Transverse colon (tissue), 4 donors: ENCODE measurements at regions of chr15 and their contacts with region 1.

Region 1: GRCh38 chr15:70488002-70488605 is 275.3 kb downstream of the UACA start:
- DNase-seq: peak; percentile 78
- H3K4me3 ChIP-seq: no peak overlapping the region
- H3K27ac ChIP-seq: no peak overlapping the region
- H3K4me1 ChIP-seq: peaks cover 0 to 17% (median 2%) of the 10 kb centered on the region in 4 donors
- H3K27me3 ChIP-seq: no peaks in the 10 kb centered on the region
- CTCF ChIP-seq: peak; percentile 95 to 98 (median 98)
- EP300 ChIP-seq: no peak
- POLR2A ChIP-seq: no peak

Region 2: GRCh38 chr15:69058830-69059556 is 1429.1 kb before region 1 on chr15:
- in situ Hi-C with region 1: no loop called
- intact Hi-C with region 1: no loop called
- DNase-seq: peak; percentile 89
- H3K4me3 ChIP-seq: no peak overlapping the region
- H3K27ac ChIP-seq: no peak overlapping the region
- H3K4me1 ChIP-seq: peaks cover 0 to 21% (median 9%) of the 10 kb centered on the region in 4 donors
- H3K27me3 ChIP-seq: peaks cover 15% of the 10 kb centered on the region
- CTCF ChIP-seq: peak; percentile 85 to 96 (median 88)
- EP300 ChIP-seq: no peak
- POLR2A ChIP-seq: no peak

Region 3: GRCh38 chr15:69475769-69476358 is 1012.2 kb before region 1 on chr15:
- in situ Hi-C with region 1: loop called in 3 of 4 experiments (anchors 10 kb)
- intact Hi-C with region 1: loop called (anchors 2 kb)
- DNase-seq: peak; percentile 84
- H3K4me3 ChIP-seq: no peak overlapping the region
- H3K27ac ChIP-seq: no peak overlapping the region
- H3K4me1 ChIP-seq: no peaks in the 10 kb centered on the region
- H3K27me3 ChIP-seq: no peaks in the 10 kb centered on the region
- CTCF ChIP-seq: peak; percentile 92 to 96 (median 95)
- EP300 ChIP-seq: no peak
- POLR2A ChIP-seq: no peak

Region 4: DNA sequence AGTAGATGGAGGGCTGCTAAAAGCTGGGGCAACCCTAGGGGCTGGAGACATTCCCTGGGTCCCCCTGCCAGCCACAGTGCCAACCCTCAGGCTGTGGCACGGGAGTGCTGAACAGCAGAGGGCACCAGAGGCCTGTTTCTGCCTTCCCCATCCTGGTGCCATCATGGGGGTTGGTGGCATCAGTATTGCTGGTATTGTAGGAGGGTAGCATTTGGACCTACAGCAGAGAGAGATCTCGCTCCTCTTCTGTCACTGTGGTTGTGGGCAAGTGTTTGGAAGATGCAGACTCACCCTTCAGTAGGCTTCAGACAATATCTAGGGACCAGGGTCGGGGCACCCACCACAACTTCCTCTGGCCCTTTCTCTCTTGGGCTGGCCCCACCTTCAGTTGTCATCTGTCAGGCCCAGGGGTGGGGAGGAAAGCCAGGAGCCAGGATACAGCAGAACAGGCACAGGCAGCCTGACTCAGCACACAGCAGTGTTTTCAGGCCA is 912.0 kb before region 1 on chr15:
- in situ Hi-C with region 1: loop called in 1 of 4 experiments (anchors 10 kb)
- intact Hi-C with region 1: loop called (anchors 10 kb)
- DNase-seq: peak; percentile 76
- H3K4me3 ChIP-seq: no peak overlapping the region
- H3K27ac ChIP-seq: peak overlapping the region in 1 of 4 donors; percentile 50
- H3K4me1 ChIP-seq: peaks cover 0 to 44% (median 35%) of the 10 kb centered on the region in 4 donors
- H3K27me3 ChIP-seq: no peaks in the 10 kb centered on the region
- CTCF ChIP-seq: peak; percentile 69 to 89 (median 74)
- EP300 ChIP-seq: no peak
- POLR2A ChIP-seq: no peak

Region 5: DNA sequence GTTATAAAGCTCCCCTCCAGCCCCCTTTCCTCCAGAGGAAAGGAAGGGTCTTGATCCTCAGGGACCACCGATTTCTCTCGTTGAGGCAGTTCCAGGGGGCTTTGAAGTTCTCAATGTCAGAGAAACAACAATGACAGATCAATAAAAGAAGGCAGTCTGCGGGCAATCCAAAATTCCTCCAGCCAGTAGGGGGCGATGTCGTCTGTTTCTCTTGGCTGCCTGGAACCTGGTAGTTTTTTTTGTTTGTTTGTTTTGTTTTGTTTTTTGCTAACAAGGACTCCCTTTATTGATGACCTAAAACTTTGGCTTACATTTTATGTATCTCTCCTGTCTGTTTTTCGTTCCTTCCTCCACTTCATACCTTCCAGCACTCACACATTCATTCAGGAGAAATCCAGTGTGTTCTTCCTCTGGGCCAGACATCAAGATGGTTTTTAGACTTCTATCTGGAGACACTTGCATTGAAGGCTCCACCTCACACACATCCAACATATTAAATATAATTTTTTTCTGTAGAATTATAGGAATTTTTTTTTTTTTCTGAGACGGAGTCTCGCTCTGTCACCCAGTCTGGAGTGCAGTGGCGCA is 758.8 kb before region 1 on chr15:
- in situ Hi-C with region 1: loop called in 1 of 4 experiments (anchors 10 kb)
- intact Hi-C with region 1: no loop called
- DNase-seq: peak; percentile 69
- H3K4me3 ChIP-seq: no peak overlapping the region
- H3K27ac ChIP-seq: no peak overlapping the region
- H3K4me1 ChIP-seq: no peaks in the 10 kb centered on the region
- H3K27me3 ChIP-seq: no peaks in the 10 kb centered on the region
- CTCF ChIP-seq: peak; percentile 70 to 80 (median 76)
- EP300 ChIP-seq: no peak
- POLR2A ChIP-seq: no peak

Region 6: GRCh38 chr15:70559265-70560239 is 71.4 kb after region 1 on chr15:
- in situ Hi-C with region 1: no loop called
- intact Hi-C with region 1: no loop called
- DNase-seq: peak; percentile 51
- H3K4me3 ChIP-seq: no peak overlapping the region
- H3K27ac ChIP-seq: no peak overlapping the region
- H3K4me1 ChIP-seq: peaks cover 0 to 9% (median 0%) of the 10 kb centered on the region in 4 donors
- H3K27me3 ChIP-seq: no peaks in the 10 kb centered on the region
- CTCF ChIP-seq: no peak
- EP300 ChIP-seq: no peak
- POLR2A ChIP-seq: no peak